ENCODE measurements at regions of chr11 and their contacts with region 1.

Region 1: DNA sequence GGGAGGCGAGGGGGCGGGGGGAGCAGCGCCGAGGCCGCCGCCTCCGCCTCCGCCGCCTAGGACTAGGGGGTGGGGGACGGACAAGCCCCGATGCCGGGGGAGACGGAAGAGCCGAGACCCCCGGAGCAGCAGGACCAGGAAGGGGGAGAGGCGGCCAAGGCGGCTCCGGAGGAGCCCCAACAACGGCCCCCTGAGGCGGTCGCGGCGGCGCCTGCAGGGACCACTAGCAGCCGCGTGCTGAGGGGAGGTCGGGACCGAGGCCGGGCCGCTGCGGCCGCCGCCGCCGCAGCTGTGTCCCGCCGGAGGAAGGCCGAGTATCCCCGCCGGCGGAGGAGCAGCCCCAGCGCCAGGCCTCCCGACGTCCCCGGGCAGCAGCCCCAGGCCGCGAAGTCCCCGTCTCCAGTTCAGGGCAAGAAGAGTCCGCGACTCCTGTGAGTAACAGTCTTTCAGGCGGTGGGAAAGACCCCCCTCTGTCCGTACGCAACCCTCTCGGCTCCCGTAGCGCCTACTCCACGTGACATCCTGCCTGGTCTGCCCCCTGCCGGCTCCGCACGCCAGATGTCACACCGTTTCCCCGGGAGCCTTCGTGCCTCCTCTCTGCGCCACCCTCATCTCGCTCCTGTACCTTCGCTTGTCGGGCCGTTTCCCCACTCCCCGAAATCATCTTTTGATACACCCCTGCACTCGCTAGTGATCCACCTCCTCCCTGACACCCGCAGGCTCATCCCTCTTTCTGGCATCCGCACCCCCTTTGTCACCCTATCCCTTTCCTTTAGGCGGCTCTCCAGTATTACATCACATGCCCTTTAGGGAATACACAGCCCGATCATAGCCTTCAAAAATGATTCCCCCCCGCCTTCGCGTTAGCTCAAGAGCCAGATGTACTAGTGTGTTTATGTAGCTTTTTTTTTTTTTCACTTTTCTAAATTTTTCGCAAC is 598 bp downstream of the ZFP91 start:
- DNase-seq: peak; percentile 97
- H3K4me3 ChIP-seq: peak overlapping the region; percentile 85 to 98 (median 95)
- H3K27ac ChIP-seq: peak overlapping the region; percentile 99 to 100 (median 100)
- H3K4me1 ChIP-seq: peaks cover 57 to 73% (median 72%) of the 10 kb centered on the region in 4 donors
- H3K27me3 ChIP-seq: no peaks in the 10 kb centered on the region
- CTCF ChIP-seq: peak; percentile 74 to 78 (median 75)
- EP300 ChIP-seq: no peak
- POLR2A ChIP-seq: peak; percentile 47

Region 2: DNA sequence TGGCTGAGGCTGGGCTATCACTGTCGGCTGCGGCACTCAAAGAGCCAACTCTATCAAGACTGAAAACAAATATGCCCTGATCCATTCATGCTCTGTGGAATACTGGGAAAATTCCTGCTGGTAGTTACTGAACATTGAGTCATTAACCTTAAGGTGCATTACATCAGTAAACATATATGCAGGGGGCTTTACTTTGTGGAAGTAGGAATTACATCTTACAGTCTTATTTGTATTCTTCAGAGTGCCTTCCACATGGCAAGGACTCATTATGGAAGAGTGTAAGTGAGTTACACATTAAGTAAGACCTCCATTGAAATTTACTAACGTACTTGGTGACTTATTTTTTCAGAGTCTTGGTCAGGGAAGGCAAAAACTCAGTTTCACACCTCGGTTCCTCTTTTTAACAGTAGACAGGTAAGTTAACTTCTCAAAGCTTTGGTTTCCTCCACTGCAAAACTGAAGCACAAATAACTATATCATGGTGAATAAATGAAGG is 76.1 kb before region 1 on chr11:
- intact Hi-C with region 1: no loop called
- DNase-seq: no peak
- H3K4me3 ChIP-seq: no peak overlapping the region
- H3K27ac ChIP-seq: no peak overlapping the region
- H3K4me1 ChIP-seq: no peaks in the 10 kb centered on the region
- H3K27me3 ChIP-seq: no peaks in the 10 kb centered on the region
- CTCF ChIP-seq: no peak
- EP300 ChIP-seq: no peak
- POLR2A ChIP-seq: no peak

Region 3: DNA sequence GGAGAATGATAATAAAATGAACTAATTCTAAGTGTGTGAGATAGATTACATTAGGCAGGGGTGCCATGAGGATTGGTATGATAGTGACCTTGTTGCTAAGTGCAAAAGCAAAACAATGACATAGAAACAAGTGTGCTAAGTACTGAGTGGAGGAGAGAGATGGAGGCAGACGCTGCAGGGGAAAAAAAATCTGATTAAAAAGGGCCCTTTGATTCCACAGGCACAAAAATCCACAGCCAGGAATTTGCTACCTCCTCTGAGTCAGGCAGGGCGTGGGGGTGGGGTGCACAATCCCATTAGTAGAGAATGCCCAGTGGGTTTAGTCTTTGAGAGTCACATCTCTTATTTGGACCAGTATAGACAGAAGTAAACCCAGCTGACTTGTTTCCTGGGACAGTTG is 42.9 kb after region 1 on chr11 and contains the start of gene CNTF:
- intact Hi-C with region 1: loop called (anchors 5 kb)
- DNase-seq: no peak
- H3K4me3 ChIP-seq: no peak within 1 kb of the TSS
- H3K27ac ChIP-seq: peak within 1 kb of the TSS; percentile 1 to 56 (median 35)
- H3K4me1 ChIP-seq: peaks cover 23 to 34% (median 26%) of the 10 kb centered on the region in 4 donors
- H3K27me3 ChIP-seq: no peaks in the 10 kb centered on the region
- CTCF ChIP-seq: no peak
- EP300 ChIP-seq: no peak
- POLR2A ChIP-seq: no peak
- total RNA-seq, gene CNTF: 1.3 to 2.5 (median 1.9) TPM

Measured in esophagus muscularis mucosa (tissue), 4 donors.